ENCODE measurements at regions of chr3 and their contacts with region 1.

Region 1: DNA sequence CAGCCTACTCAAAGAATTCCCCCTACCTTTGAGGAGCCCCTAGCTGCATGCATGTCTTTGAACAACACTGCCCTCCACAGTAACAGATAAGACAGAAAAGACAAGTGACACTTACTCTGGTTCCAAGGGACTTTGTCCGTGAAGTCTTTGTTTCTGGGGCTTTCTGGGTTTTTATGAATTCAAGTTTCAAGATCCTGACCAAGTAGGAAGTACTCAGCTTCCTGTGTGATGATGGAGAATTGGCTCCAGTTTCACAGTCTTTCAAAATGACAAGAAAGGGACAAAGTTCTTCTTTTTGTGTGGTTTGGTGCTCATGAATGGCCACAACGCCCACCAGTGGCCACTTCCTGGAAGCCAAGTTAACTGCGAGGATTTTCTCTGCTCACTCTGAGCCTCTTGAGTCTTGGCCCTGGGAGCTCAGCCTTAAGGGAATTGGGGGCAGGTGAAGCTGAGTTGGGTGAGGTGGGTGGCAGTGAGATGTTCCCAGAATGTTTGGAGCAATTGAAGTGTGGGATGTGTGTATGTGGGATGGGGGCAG is at the start of gene CCR1:
- DNase-seq: peak; percentile 45
- CTCF ChIP-seq: peak; percentile 68

Region 2: GRCh38 chr3:46089237-46090011 is 118.8 kb before region 1 on chr3:
- in situ Hi-C with region 1: loop called (anchors 10 kb)
- DNase-seq: peak; percentile 45
- CTCF ChIP-seq: no peak

Region 3: DNA sequence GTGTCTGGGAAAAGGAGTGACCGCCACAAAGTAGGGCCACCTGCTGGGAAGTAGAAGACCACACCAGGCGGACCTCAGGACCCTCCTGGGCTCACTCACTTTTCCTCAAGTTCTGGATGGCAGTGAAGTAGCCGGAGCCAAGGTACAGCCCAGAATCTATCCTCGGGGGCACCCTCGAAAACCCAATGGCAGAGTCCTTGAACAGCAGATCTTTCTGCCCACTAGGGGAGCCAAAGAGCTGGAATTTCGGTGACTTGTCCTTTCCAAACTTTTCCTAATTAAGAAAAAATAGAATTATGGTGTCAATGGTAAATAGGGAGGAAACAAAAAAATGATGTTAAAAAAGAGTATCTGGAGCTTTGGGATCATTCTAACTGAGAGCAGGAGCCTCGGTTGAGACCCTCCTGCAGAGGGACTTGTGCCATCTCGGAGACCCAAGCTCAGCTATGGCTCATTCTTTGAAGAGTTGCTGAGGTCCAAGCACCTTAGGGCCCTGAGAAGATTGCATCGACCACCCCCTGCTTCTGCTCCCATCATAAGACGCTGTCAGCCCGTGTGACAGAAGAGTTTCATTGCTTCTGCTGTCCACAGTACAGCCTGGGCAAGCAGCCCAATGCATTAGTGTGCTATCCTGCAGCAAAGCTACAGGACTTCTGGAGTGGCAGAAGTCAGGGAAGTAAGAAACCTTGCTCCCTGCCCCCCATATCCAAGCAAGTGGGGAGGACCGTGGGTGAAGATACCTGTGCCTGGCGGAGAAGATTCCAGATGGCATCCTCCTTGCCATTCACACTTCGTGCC is 241.7 kb after region 1 on chr3:
- in situ Hi-C with region 1: no loop called
- DNase-seq: no peak
- CTCF ChIP-seq: peak; percentile 40

Region 4: DNA sequence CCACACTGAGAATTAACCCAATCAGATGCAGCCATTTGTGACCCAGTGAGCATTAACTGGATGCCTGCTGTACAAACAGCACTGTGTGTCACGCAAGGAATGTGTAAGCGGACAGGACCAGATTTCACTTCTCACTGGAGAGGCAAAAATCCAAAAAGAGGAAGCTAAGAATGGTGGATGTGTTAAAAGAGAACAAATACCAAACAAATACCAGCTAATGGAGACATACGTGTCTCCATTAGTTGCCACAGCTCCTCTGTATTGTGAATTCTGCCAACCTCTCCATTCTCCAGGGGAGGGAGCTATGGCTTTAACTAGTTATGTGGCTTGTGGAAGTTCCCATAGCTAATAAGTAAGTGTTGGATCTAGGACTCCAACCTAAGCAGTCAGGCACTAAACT is 253.9 kb after region 1 on chr3:
- in situ Hi-C with region 1: no loop called
- DNase-seq: no peak
- CTCF ChIP-seq: no peak